ENCODE measurements at regions of chr11 and their contacts with region 1.

Region 1: DNA sequence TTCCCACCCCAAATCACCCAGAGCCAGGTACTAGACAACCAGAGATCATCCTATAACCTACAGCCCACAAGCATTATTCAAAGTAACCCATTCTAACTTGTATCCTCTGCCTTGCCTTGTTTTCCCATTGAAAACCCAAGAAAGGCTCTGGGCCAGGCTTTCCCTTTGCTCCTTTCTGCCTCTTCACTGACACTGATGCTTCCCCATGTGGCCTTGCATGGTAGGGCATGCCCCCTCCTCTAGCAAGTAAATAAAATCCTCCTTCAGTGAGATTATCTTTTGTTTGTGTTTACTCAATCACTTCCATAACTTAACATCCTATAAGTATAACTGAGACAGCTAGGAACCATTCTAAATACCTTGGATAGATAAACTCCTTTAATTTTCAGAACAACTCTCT is 65.6 kb upstream of the FAR1 start:
- DNase-seq: no peak
- H3K4me3 ChIP-seq: no peak overlapping the region
- H3K27ac ChIP-seq: no peak overlapping the region
- H3K4me1 ChIP-seq: no peaks in the 10 kb centered on the region
- H3K27me3 ChIP-seq: no peaks in the 10 kb centered on the region
- CTCF ChIP-seq: no peak

Region 2: GRCh38 chr11:14054116-14055107 is 451.6 kb after region 1 on chr11:
- intact Hi-C with region 1: loop called (anchors 5 kb)
- DNase-seq: peak in 1 of 2 donors; percentile 38
- H3K4me3 ChIP-seq: no peak overlapping the region
- H3K27ac ChIP-seq: no peak overlapping the region
- H3K4me1 ChIP-seq: peaks cover 0 to 5% (median 0%) of the 10 kb centered on the region in 4 donors
- H3K27me3 ChIP-seq: no peaks in the 10 kb centered on the region
- CTCF ChIP-seq: no peak